Mammary epithelial cell (primary cell): ENCODE measurements at regions of chr19 and their contacts with region 1.

Region 1: GRCh38 chr19:633068-633785 is at the start of gene POLRMT:
- DNase-seq: peak; percentile 97
- H3K4me3 ChIP-seq: peak within 1 kb of the TSS; percentile 84 to 93 (median 84)
- H3K27ac ChIP-seq: peak within 1 kb of the TSS; percentile 51
- H3K4me1 ChIP-seq: peaks cover 14% of the 10 kb centered on the region
- H3K27me3 ChIP-seq: no peaks in the 10 kb centered on the region
- CTCF ChIP-seq: peak in 1 of 2 donors; percentile 17
- total RNA-seq, gene POLRMT: 23.5 to 50.9 TPM

Region 2: DNA sequence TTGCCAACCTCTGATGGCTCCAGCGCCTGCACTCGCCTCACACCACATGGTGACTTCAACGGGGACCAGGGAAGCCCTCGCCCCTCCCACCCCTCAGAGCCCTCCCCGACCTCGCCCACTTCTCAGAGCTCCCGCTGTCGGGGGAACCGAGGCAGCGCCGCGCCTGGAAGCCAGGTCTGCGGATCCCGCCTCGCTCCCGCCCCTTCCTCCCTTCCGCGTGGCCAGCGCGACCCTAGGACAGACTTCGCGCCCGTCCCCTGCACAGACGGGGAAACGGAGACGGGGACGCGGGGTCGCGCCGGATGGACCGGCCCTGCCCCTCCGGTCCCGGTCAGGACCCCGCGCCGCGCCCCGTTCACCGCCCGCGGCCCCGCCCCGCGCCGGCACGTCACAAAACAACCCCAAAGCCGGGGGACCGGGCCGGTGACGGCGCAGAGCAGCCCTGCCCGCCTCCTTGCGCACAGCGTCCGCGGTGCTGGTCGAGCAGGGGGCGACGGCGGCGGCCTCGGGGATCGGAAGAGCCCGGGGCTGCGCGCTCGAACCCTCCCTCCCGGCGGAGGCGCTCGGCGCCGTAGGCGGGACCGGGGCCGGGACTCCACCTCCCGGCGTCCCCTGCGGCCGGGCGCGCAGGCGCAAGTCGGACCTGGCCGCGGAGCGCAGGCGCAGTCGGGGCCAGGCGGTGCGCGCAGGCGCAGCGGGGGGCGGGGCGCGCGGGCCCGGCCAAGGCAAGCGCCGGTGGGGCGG is 102.0 kb before region 1 on chr19:
- CTCF ChIA-PET with region 1: no interaction called
- dilution Hi-C with region 1: no loop called
- in situ Hi-C with region 1: no loop called
- intact Hi-C with region 1: loop called (anchors 1 kb)
- DNase-seq: peak; percentile 73
- H3K4me3 ChIP-seq: peak overlapping the region; percentile 71 to 94 (median 85)
- H3K27ac ChIP-seq: peak overlapping the region; percentile 60
- H3K4me1 ChIP-seq: peaks cover 29% of the 10 kb centered on the region
- H3K27me3 ChIP-seq: no peaks in the 10 kb centered on the region
- CTCF ChIP-seq: peak in 1 of 2 donors; percentile 10

Region 3: GRCh38 chr19:558770-559439 is 74.3 kb before region 1 on chr19:
- CTCF ChIA-PET with region 1: no interaction called
- dilution Hi-C with region 1: no loop called
- in situ Hi-C with region 1: no loop called
- intact Hi-C with region 1: no loop called
- DNase-seq: no peak
- H3K4me3 ChIP-seq: no peak overlapping the region
- H3K27ac ChIP-seq: no peak overlapping the region
- H3K4me1 ChIP-seq: no peaks in the 10 kb centered on the region
- H3K27me3 ChIP-seq: no peaks in the 10 kb centered on the region
- CTCF ChIP-seq: no peak

Region 4: DNA sequence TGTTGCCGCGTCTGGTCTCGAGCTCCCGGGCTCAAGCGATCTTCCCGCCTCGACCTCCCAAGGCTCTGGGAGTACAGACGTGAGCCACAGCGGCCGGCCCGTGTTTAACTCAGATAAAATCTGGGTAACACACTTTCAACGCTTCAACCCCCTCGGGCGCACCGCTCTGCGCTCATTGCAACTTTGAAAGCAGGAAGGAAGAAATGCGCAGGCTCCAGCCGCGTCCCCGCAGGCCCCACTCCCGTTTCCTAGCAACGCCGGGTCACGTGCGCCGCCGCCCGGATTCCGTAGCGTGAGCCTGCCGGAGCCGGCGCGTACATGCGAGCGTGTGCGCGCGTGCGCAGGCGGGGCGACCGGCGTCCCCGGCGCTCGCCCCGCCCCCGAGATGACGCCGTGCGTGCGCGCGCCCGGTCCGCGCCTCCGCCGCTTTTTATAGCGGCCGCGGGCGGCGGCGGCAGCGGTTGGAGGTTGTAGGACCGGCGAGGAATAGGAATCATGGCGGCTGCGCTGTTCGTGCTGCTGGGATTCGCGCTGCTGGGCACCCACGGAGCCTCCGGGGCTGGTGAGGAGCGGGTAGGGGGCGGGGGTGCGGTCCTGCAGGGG is 61.0 kb before region 1 on chr19 and contains the start of gene BSG:
- CTCF ChIA-PET with region 1: no interaction called
- dilution Hi-C with region 1: no loop called
- in situ Hi-C with region 1: no loop called
- intact Hi-C with region 1: loop called (anchors 2 kb)
- DNase-seq: peak; percentile 98
- H3K4me3 ChIP-seq: peak within 1 kb of the TSS; percentile 65 to 97 (median 93)
- H3K27ac ChIP-seq: peak within 1 kb of the TSS; percentile 83
- H3K4me1 ChIP-seq: peaks cover 39% of the 10 kb centered on the region
- H3K27me3 ChIP-seq: no peaks in the 10 kb centered on the region
- CTCF ChIP-seq: no peak
- total RNA-seq, gene BSG: 493 to 593 TPM

Region 5: DNA sequence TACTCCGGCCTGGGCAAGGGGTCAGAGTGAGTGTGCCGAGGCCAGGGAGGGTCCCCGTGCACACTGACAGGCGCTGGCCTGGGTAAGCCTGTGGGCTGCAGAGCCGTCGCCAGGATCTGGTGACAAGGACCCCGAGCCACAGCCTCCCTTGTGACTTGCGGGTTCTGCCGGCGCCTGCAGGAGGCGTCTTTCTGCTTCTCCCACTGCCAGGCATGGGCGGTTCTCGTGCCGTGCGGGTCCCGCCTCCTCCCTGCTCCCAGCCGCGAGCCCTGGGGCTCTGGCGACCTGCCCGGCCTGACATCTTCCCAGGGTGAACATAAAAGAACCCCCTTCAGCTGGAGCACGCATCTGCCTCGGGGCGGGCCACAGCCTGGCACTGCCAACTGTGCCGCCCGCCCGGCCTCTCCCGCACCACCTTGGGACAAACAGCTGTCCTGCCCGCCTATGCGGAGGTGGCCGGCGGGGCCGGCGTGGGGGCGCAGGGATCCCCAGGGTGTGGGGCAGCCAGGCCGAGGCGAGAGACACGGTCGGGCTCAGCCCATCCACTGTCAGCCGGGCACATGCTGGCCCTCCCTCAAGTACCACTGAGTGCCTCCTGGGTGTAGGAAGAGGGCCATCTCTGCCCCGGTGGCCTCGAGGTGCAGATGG is 45.0 kb before region 1 on chr19:
- CTCF ChIA-PET with region 1: no interaction called
- dilution Hi-C with region 1: no loop called
- in situ Hi-C with region 1: no loop called
- intact Hi-C with region 1: loop called (anchors 2 kb)
- DNase-seq: peak; percentile 75
- H3K4me3 ChIP-seq: no peak overlapping the region
- H3K27ac ChIP-seq: no peak overlapping the region
- H3K4me1 ChIP-seq: peaks cover 17% of the 10 kb centered on the region
- H3K27me3 ChIP-seq: peaks cover 14% of the 10 kb centered on the region
- CTCF ChIP-seq: peak; percentile 44 to 75

Region 6: DNA sequence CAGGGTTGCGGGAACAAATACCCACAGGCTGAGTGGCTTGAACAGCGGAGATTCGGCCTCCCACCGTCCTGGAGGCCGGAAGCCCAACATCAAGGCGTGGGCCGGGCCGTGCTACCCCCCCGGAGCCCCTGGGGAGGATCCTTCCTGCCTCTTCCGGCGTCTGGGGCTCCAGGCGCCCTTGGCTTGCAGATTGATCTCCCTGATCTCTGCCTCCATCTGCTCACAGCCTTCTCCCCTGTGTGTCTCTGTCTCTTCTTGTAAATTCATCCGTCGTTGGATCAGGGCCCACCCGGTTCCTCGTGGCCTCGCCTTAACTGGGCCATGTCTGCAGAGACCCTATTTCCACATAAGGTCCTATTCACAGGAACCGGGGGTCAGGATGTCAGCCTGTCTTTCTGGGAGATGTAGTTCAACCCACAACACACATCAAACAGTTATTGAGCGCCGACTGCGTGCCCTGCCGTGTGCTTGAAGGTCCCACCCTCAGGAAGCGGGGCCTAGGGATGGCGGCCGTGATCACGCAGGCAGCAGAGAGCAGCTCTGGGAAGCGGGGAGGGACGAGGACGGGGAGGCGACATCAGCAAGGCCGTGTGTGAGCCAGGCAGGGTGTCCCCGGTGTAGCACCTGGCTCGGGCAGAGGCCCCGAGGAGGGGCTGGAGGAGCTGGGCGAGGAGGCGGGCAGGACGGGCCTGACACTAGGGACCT is 22.3 kb before region 1 on chr19:
- CTCF ChIA-PET with region 1: no interaction called
- dilution Hi-C with region 1: no loop called
- in situ Hi-C with region 1: no loop called
- intact Hi-C with region 1: loop called (anchors 2 kb)
- DNase-seq: no peak
- H3K4me3 ChIP-seq: no peak overlapping the region
- H3K27ac ChIP-seq: no peak overlapping the region
- H3K4me1 ChIP-seq: peaks cover 12% of the 10 kb centered on the region
- H3K27me3 ChIP-seq: no peaks in the 10 kb centered on the region
- CTCF ChIP-seq: no peak